ENCODE measurements at regions of chr12 and their contacts with region 1.

Region 1: DNA sequence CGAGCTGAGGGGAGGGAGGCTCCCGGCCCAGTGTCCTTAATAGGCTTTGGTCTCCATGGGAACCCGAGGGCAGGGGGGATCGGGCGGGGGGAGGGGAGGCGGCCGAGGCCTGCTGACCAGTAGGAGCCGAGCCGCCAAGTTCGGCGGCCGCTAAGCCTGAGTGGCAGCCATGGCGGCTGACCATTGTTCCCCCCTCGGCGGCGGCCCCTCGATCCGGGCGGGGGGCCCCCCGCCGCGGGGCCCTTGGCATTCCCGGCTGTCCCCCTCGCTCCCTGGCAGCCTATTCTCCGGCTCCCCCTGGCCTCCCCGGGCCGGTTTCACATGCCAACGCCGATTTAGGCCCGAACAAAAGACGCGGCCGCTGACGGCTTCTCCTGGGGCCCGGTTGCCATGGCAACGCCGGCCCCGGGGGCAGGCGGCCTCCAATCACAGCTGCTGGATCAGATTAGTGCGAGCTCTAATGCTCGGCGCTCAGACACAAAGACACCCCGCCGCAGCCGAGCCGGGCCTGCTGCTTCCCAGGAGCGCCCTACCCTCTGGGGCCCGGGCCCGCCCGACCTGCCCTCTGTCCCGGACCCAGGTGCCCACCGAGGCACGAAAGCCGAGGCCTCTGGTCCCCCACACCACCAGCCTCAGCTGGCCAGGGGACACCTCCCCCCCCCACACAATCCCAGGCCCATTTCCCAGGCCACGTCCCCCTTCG is 7.3 kb downstream of the MSI1 start:
- DNase-seq: no peak
- ATAC-seq: no peak
- H3K4me3 ChIP-seq: no peak overlapping the region
- H3K27ac ChIP-seq: no peak overlapping the region
- H3K4me1 ChIP-seq: peaks cover 0 to 8% (median 0%) of the 10 kb centered on the region in 4 donors
- H3K27me3 ChIP-seq: no peaks in the 10 kb centered on the region
- CTCF ChIP-seq: no peak
- POLR2A ChIP-seq: no peak

Region 2: DNA sequence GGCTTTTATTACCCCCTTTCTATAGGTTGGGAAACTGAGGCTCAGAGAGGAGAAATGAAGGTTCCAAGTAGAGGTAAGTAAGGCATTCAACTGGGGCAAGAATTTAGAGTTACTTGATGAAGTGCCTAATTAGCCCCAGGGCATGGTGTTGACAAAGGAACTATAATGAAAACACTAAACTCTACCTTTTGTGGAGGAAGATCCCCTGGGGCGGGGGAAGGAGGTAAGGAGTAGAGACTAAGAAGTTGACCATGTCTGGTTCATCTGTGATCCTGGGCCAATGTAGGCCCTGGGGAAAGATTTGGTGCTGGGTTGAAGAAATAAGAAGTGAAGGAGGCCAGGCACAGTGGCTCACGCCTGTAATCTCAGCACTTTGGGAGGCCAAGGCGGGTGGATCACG is 60.0 kb after region 1 on chr12:
- intact Hi-C with region 1: loop called in 1 of 2 experiments (anchors 10 kb)
- DNase-seq: no peak
- ATAC-seq: no peak
- H3K4me3 ChIP-seq: no peak overlapping the region
- H3K27ac ChIP-seq: no peak overlapping the region
- H3K4me1 ChIP-seq: no peaks in the 10 kb centered on the region
- H3K27me3 ChIP-seq: no peaks in the 10 kb centered on the region
- CTCF ChIP-seq: no peak
- POLR2A ChIP-seq: no peak

Region 3: DNA sequence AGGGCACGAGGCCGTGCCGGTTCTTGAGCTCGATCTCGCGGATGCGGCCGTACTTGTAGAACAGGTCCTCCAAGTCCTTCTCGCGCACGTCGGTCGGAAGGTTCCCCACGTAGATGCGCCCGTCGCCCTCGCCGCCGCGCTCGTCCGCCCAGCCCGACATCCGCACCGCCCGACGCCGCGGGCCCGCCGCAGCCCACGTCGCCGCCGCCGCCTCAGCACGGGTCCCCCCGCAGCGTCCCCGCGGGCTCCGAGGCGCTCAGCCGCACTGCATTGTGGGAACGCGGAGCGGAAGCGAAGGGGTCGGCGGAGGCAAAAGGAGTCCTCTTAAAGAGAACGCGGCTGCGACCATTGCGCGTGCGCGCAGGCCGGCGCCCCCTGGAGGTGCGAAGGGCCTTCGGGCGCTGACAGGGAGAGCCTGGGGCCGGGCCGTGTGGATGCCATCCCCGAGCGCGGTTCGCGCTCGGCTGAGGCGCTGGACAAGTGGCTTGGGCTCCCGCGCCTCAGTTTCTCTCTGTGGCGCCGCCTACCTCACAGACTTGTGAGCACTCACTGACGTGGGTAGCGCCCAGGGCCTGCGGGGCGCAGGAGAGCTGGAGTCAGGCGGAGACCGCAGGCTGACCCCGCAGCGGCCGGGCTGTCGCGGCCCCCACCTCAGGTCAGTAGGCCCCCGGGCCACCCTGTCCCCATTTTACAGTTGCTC is 107.9 kb after region 1 on chr12 and contains the start of gene SRSF9:
- intact Hi-C with region 1: no loop called
- DNase-seq: peak; percentile 97
- ATAC-seq: peak; percentile 95 to 98 (median 96)
- H3K4me3 ChIP-seq: peak within 1 kb of the TSS; percentile 84 to 89 (median 88)
- H3K27ac ChIP-seq: peak within 1 kb of the TSS; percentile 76 to 92 (median 83)
- H3K4me1 ChIP-seq: peaks cover 0 to 32% (median 0%) of the 10 kb centered on the region in 4 donors
- H3K27me3 ChIP-seq: no peaks in the 10 kb centered on the region
- CTCF ChIP-seq: peak; percentile 87 to 96 (median 92)
- POLR2A ChIP-seq: peak; percentile 79
- total RNA-seq, gene SRSF9: 36.4 to 63.3 (median 60.2) TPM

Measured in right lobe of liver (tissue), 6 donors.